ENCODE measurements at regions of chr14 and their contacts with region 1.

Region 1: GRCh38 chr14:95117937-95118721 is 39.2 kb downstream of the DICER1 start:
- DNase-seq: no peak
- ATAC-seq: no peak
- H3K4me3 ChIP-seq: no peak overlapping the region
- H3K27ac ChIP-seq: no peak overlapping the region
- H3K4me1 ChIP-seq: no peaks in the 10 kb centered on the region
- H3K27me3 ChIP-seq: no peaks in the 10 kb centered on the region
- CTCF ChIP-seq: no peak
- EP300 ChIP-seq: no peak
- POLR2A ChIP-seq: no peak
- RAD21 ChIP-seq: no peak

Region 2: DNA sequence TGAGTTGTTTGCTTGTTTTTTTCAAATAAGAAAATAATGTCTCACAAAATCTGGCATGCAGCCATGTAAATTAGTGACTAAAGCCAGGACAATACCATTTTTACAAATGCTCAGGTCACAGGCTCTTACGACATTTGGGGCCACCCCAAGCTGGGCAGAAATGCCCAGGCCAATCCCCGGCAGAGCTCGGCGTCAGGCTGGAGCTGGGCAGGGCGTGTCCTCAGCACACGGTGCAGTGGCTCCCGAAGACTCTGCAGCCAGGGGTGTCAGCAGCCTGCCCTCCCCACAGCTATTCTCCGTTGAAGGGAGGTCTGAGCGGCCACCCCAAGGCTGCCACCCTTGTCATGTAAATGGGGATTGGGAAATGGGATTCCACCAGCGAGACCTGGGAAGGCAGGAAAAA is 119.5 kb before region 1 on chr14:
- CTCF ChIA-PET with region 1: no interaction called
- POLR2A ChIA-PET with region 1: no interaction called
- in situ Hi-C with region 1: no loop called
- intact Hi-C with region 1: no loop called
- DNase-seq: no peak
- ATAC-seq: no peak
- H3K4me3 ChIP-seq: no peak overlapping the region
- H3K27ac ChIP-seq: no peak overlapping the region
- H3K4me1 ChIP-seq: no peaks in the 10 kb centered on the region
- H3K27me3 ChIP-seq: peaks cover 3 to 56% of the 10 kb centered on the region in 2 experiments
- CTCF ChIP-seq: no peak
- EP300 ChIP-seq: no peak
- POLR2A ChIP-seq: no peak
- RAD21 ChIP-seq: no peak

Region 3: DNA sequence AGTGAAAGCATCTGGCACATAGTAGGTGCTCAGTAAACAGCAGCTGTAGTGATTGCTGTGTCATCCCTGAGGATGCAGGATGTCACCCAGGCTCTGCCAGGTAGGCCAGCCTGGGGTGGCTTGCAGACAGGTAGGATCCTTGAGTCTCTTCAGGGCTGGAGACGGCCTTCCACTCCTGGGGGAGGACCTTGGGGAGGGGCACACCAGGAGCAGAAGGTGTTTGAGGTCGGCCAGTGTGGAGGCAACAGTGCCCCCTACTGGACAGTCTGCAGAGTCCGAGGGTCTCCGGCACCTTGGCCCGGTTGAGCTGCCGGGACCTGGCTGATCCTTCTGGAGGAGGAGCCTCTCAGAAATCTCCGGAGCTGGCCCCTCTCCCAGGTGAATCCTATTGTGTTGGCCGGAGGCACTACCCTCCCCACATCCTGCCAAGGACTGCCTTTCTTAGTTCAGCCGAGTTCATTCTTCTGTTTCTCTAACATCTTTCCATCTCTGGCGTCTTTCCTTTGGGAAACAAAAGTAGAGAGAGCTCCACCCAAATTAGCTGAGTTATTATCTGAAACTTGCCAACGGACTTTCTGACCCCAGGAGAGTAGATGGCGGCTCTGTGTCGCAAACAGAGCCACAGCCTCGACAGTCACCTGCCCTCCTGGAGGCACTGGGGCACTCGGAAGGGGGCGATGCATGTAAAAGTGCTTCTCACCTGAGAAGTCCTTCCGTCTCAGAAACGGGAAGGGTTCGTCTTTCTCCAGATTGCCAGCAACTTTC is 243.4 kb after region 1 on chr14:
- CTCF ChIA-PET with region 1: no interaction called
- POLR2A ChIA-PET with region 1: no interaction called
- in situ Hi-C with region 1: no loop called
- intact Hi-C with region 1: loop called (anchors 10 kb)
- DNase-seq: no peak
- ATAC-seq: peak; percentile 81
- H3K4me3 ChIP-seq: peak overlapping the region in 2 of 3 experiments; percentile 46 to 51; a peak in 3 of 6 replicates
- H3K27ac ChIP-seq: no peak overlapping the region
- H3K4me1 ChIP-seq: peaks cover 51% of the 10 kb centered on the region
- H3K27me3 ChIP-seq: no peaks in the 10 kb centered on the region
- CTCF ChIP-seq: peak; percentile 84
- EP300 ChIP-seq: no peak
- POLR2A ChIP-seq: no peak
- RAD21 ChIP-seq: peak; percentile 75

Measured in HepG2 (cell line).